ENCODE measurements at regions of chr20 and their contacts with region 1.

Region 1: DNA sequence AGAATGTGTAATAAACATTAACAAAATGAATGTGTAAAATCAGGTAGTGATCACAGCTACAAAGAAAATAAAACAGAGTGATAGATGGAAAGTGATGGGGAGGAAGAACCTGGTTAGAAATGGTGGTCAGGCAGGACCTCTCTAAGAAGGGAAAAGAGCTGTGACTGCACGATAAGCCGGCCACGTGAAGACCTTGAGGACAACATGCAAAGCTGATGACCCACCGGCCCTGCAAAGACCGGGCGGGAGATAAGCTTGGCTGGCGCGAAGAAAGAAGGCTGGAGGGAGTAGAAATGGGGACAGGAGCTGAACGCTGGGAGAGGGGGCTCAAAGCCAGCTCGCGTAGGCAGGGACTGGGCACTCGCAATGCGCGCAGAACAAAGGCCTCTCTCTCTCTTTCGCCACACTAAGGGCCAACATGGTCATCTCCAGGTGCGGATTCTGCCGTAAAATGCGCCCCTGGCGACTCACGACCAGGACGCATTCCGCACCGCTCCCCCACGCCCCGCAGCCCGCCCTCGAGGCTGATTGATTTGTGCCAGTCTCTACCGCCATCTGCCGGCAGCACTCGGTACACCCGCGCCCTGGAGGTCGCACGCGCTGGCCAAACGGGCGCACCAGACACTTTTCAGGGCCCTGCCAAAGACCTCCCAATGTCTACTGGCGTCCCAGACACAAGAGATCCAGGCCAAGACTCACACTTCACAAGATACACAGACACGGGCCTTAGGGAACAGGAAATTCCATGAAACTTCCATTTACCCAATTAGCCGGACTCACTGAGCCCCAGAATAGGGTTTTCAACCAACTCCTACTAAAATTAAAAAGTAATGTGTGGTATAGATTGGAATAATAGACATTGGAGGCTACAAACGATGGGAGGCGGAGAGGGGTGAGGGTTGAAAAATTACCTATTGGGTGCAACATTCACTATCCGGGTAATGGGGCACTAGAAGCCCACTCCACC is 9.4 kb downstream of the DEFB132 start:
- DNase-seq: peak; percentile 89
- H3K4me3 Mint-ChIP-seq: peak overlapping the region; percentile 65
- H3K27ac Mint-ChIP-seq: no peak overlapping the region
- H3K4me1 Mint-ChIP-seq: peaks cover 9% of the 10 kb centered on the region
- H3K27me3 Mint-ChIP-seq: peaks cover 12% of the 10 kb centered on the region

Region 2: GRCh38 chr20:210809-211502 is 55.9 kb before region 1 on chr20:
- CTCF ChIA-PET with region 1: interaction called, 12 read pairs
- POLR2A ChIA-PET with region 1: no interaction called
- DNase-seq: no peak
- H3K4me3 Mint-ChIP-seq: no peak overlapping the region
- H3K27ac Mint-ChIP-seq: no peak overlapping the region
- H3K4me1 Mint-ChIP-seq: no peaks in the 10 kb centered on the region
- H3K27me3 Mint-ChIP-seq: peaks cover 16% of the 10 kb centered on the region

Region 3: GRCh38 chr20:235891-236290 is 31.0 kb before region 1 on chr20:
- CTCF ChIA-PET with region 1: interaction called, 11 read pairs
- POLR2A ChIA-PET with region 1: no interaction called
- DNase-seq: no peak
- H3K4me3 Mint-ChIP-seq: no peak overlapping the region
- H3K27ac Mint-ChIP-seq: no peak overlapping the region
- H3K4me1 Mint-ChIP-seq: peaks cover 22% of the 10 kb centered on the region
- H3K27me3 Mint-ChIP-seq: peaks cover 5% of the 10 kb centered on the region

Measured in activated CD4-positive, alpha-beta memory T cell treated with anti-CD3 and anti-CD28 coated beads, Interleukin-2, amount 10 ng/mL, durations not matched to agents 7 days and 5 days (primary cell).